Left ventricle myocardium inferior (tissue), 1 donor: ENCODE measurements at regions of chr20 and their contacts with region 1.

Region 1: DNA sequence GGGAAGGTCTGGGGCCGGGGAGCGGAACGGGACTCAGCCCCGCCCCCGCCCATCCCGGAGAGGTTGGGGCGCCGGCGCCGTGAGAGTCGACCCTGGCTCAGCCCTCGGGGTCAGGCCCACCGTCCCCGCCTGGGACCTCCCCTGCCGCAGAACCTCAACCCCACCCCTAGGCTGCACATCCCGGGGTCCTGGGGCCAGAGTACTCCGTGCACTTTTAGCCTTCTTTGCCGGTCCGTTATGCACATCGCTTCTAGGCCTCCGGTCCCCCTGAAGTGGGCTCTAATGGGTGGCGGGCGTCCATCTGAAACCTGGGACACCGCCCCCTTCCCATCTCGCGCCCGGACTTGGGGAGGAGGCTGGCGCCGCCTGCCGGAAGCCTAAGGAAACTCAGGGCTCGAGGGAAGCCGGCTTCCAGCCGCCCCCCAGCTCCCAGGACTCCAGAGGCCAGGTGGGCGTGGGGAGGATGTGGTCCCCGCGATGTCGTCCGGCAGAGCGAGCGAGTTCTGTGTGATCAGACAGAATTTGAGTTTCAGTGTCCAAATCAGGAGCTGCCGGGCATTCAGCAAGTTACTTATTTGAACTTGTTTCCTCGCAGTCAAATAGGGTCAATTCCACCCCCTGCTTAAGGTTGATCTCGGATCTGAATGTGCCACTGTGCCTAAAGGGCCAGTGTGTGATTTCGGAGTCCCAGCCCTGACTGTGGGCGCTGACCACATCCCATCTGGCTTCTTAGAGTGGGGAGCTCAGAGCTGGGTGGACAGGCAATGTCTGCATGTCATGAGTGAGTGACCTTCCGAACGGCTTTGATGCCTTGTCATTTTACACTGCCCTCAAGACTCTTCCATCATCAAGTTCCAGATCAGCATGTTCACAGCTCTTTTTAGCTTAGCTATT is 47.6 kb downstream of the CPXM1 start:
- DNase-seq: no peak
- H3K4me3 ChIP-seq: peak overlapping the region; percentile 64
- H3K27ac ChIP-seq: no peak overlapping the region
- H3K4me1 ChIP-seq: peaks cover 34% of the 10 kb centered on the region
- H3K27me3 ChIP-seq: peaks cover 93% of the 10 kb centered on the region
- CTCF ChIP-seq: peak; percentile 63

Region 2: GRCh38 chr20:3000852-3001523 is 248.2 kb after region 1 on chr20:
- intact Hi-C with region 1: loop called (anchors 5 kb)
- DNase-seq: no peak
- H3K4me3 ChIP-seq: no peak overlapping the region
- H3K27ac ChIP-seq: no peak overlapping the region
- H3K4me1 ChIP-seq: no peaks in the 10 kb centered on the region
- H3K27me3 ChIP-seq: no peaks in the 10 kb centered on the region
- CTCF ChIP-seq: peak; percentile 68